Natural killer cell (primary cell): ENCODE measurements at regions of chr5 and their contacts with region 1.

Region 1: DNA sequence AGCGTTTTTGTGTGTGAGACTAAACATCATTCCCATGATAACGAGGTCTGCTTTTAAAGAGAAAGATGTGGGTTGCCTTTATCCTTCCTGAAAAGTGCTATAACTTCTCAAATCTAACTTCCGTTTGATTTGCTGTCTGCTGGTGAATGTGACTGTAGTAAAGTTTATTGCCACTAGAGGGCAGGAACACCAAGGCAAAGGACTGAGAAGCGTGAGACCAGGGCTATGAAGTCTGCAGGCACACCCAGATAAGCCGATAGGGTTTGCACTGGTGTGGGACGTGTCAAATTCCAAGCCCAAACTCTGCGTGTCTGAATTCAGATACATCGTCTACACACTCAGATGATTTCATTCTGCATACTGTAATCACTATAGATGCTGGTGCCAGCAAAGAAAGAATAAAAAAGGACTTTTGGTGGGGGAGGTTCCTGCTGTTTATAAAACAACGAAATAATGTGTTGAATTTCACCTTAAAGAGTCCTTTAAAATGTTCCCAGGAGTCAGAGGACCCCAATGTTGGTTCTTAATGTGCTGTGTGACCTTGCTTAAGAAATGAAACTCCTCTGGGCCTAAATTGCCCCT is 87.2 kb downstream of the PTTG1 start:
- DNase-seq: peak in 1 of 2 donors; percentile 93
- ATAC-seq: peak; percentile 81 to 84 (median 84)
- H3K4me3 ChIP-seq: no peak overlapping the region
- H3K4me3 Mint-ChIP-seq: peak overlapping the region; percentile 10
- H3K27ac ChIP-seq: no peak overlapping the region
- H3K27ac Mint-ChIP-seq: peak overlapping the region; percentile 32 to 73
- H3K4me1 ChIP-seq: peaks cover 33% of the 10 kb centered on the region
- H3K4me1 Mint-ChIP-seq: peaks cover 29 to 39% of the 10 kb centered on the region in 2 donors
- H3K27me3 ChIP-seq: no peaks in the 10 kb centered on the region
- H3K27me3 Mint-ChIP-seq: peaks cover 5 to 14% of the 10 kb centered on the region in 2 donors
- CTCF ChIP-seq: peak; percentile 89

Region 2: GRCh38 chr5:159444441-159445082 is 1064.3 kb before region 1 on chr5:
- intact Hi-C with region 1: no loop called
- DNase-seq: peak in 1 of 2 donors; percentile 65
- ATAC-seq: peak in 1 of 3 donors; percentile 42
- H3K4me3 ChIP-seq: no peak overlapping the region
- H3K4me3 Mint-ChIP-seq: no peak overlapping the region
- H3K27ac ChIP-seq: no peak overlapping the region
- H3K27ac Mint-ChIP-seq: no peak overlapping the region
- H3K4me1 ChIP-seq: peaks cover 3% of the 10 kb centered on the region
- H3K4me1 Mint-ChIP-seq: peaks cover 0 to 10% of the 10 kb centered on the region in 2 donors
- H3K27me3 ChIP-seq: no peaks in the 10 kb centered on the region
- H3K27me3 Mint-ChIP-seq: peaks cover 11 to 22% of the 10 kb centered on the region in 2 donors
- CTCF ChIP-seq: peak; percentile 12

Region 3: GRCh38 chr5:160467555-160468362 is 41.1 kb before region 1 on chr5:
- intact Hi-C with region 1: loop called (anchors 2 kb)
- DNase-seq: peak; percentile 79 to 89
- ATAC-seq: peak; percentile 84 to 94 (median 93)
- H3K4me3 ChIP-seq: peak overlapping the region; percentile 37
- H3K4me3 Mint-ChIP-seq: peak overlapping the region; percentile 93
- H3K27ac ChIP-seq: peak overlapping the region; percentile 60
- H3K27ac Mint-ChIP-seq: peak overlapping the region; percentile 89 to 92
- H3K4me1 ChIP-seq: peaks cover 41% of the 10 kb centered on the region
- H3K4me1 Mint-ChIP-seq: peaks cover 59 to 63% of the 10 kb centered on the region in 2 donors
- H3K27me3 ChIP-seq: no peaks in the 10 kb centered on the region
- H3K27me3 Mint-ChIP-seq: no peaks in the 10 kb centered on the region
- CTCF ChIP-seq: no peak

Region 4: DNA sequence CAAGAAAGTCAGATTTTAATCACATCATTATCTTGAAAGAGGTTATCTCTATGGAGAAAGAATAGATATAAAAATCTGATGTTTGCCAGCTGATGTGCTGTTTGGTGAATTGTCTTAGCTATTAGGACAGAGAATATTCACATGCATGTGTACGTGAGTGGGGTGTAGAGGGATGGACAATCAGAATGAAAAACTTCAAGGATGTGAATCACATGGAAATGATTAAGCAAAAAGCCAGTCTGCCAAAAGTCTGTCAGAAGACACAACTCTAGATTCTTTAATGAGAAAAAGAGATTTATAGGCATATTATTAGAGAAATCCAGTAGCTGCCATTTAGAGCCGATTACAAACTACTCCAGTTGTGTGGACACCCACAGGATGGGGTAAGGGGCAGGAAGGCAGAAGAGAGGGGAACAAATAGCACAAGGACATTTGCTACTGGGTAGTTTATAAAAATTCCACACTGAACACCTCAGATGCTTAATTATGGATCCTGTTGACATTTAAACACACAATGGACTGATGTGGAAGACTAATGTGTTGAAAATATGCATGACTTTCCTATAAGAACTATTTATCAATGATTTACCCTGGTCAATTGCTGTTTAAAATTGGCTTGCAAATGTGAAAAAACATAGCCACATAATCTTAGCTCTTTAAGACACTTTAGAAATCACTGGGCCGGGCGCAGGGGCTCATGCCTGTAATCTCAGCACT is 40.2 kb after region 1 on chr5:
- intact Hi-C with region 1: no loop called
- DNase-seq: no peak
- ATAC-seq: no peak
- H3K4me3 ChIP-seq: no peak overlapping the region
- H3K4me3 Mint-ChIP-seq: no peak overlapping the region
- H3K27ac ChIP-seq: no peak overlapping the region
- H3K27ac Mint-ChIP-seq: no peak overlapping the region
- H3K4me1 ChIP-seq: no peaks in the 10 kb centered on the region
- H3K4me1 Mint-ChIP-seq: no peaks in the 10 kb centered on the region
- H3K27me3 ChIP-seq: no peaks in the 10 kb centered on the region
- H3K27me3 Mint-ChIP-seq: peaks cover 0 to 30% of the 10 kb centered on the region in 2 donors
- CTCF ChIP-seq: no peak